ENCODE measurements at regions of chr3 and their contacts with region 1.

Region 1: DNA sequence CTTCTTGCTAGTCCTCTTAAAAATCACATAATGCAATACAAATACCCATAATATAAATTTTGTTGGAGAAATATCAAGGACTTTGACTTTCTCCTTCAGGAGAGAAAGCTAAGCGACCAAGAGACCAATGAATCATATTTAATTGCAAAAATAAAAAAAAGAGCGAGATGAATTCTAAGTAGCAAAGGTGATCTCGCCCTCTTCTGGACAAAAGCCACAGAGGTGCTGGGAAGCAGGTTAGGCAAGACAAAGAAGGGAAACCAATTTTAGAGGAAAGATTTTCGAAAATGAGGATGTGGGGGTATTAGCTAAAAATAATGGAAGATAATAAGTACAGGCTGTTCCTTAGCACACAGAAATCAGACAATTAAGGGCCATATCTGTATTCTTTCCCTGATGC is 111.4 kb upstream of the PLAAT1 start:
- DNase-seq: peak; percentile 53
- H3K4me3 Mint-ChIP-seq: no peak overlapping the region
- H3K27ac Mint-ChIP-seq: no peak overlapping the region
- H3K4me1 Mint-ChIP-seq: peaks cover under 1% of the 10 kb centered on the region
- H3K27me3 Mint-ChIP-seq: peaks cover 28% of the 10 kb centered on the region
- CTCF ChIP-seq: no peak

Region 2: DNA sequence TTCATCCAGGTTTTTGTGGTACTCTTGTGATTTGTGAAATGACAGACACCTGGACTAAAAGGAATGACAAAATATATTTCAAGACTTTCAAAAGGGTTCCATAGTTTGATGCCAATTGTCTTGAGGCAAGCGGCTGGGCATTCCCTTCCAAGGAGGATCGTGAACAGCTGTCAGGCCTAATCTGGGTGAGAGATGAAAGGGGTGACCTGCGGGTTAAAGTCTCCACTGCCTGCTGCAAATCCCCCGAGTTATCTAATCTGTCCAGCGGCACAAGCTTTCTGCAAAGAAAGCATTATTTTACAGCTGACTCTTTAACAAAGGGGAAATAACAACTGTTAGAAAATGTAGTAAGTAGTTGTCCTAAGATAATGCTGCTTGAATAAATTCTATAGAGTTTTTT is 83.2 kb before region 1 on chr3:
- CTCF ChIA-PET with region 1: interaction called, 5 read pairs
- intact Hi-C with region 1: loop called (anchors 2 kb)
- DNase-seq: no peak
- H3K4me3 Mint-ChIP-seq: no peak overlapping the region
- H3K27ac Mint-ChIP-seq: no peak overlapping the region
- H3K4me1 Mint-ChIP-seq: no peaks in the 10 kb centered on the region
- H3K27me3 Mint-ChIP-seq: peaks cover 6% of the 10 kb centered on the region
- CTCF ChIP-seq: no peak

Region 3: DNA sequence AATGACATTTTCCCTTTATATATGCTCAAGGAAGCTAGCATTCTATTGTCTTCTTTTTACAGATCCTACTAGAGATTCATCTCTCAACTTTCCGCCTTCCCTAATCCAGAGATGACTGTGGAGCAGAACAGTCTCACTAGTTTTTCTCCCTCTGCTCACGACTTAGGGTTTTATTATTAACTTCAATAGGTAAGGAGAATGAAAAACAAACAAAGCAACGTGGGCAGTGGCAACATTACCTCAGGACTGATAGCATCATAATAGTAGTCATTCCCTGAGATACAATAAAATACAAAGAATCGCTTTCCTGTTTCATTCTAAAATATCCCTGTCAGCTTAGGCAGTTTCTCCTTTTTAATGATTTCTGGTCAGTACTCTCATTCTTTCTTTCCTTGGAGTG is 42.9 kb before region 1 on chr3:
- CTCF ChIA-PET with region 1: no interaction called
- intact Hi-C with region 1: loop called (anchors 5 kb)
- DNase-seq: peak; percentile 23
- H3K4me3 Mint-ChIP-seq: peak overlapping the region; percentile 27
- H3K27ac Mint-ChIP-seq: peak overlapping the region; percentile 12
- H3K4me1 Mint-ChIP-seq: peaks cover 16% of the 10 kb centered on the region
- H3K27me3 Mint-ChIP-seq: no peaks in the 10 kb centered on the region
- CTCF ChIP-seq: no peak

Region 4: DNA sequence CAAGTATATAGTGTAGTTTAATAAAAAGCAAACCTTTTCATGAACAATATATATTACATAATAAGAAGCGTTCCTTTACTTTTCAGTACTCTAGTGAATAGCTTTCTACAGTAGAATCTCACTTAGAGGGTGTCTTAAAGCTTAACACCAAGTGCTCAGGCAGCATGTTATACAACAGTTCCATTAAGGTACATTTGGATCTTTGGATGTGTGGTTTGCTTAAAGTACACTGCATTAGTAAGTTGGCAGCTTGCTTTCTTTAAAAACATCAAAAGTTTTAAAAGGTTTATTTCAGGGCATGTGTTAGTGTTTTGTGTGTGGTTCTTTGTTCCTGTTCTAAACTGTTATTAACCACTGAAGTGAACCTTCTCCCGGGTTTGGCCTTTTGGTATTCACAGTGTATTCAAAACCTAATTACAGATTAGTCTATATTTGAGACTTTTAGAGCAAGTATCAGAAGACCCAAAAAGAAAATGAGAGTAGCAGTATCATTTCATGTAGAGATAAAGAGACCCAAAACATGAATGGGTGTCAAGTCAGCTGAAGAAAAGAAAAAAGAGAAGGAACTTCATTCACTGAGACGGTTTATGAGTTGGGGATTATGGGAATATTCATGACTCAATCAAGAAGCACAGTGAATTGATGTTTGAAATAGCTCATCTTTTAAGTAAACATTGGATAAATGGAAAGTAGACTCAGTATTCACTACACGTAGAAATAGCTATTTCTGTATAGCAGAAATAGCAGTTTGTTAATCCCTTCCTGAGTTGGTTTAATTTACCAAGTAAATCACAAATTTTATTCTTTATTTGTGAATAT is 557.3 kb after region 1 on chr3:
- CTCF ChIA-PET with region 1: no interaction called
- intact Hi-C with region 1: no loop called
- DNase-seq: no peak
- H3K4me3 Mint-ChIP-seq: no peak overlapping the region
- H3K27ac Mint-ChIP-seq: peak overlapping the region; percentile 11
- H3K4me1 Mint-ChIP-seq: peaks cover 33% of the 10 kb centered on the region
- H3K27me3 Mint-ChIP-seq: no peaks in the 10 kb centered on the region
- CTCF ChIP-seq: no peak

Measured in Calu3 (cell line).